ENCODE measurements at regions of chr6 and their contacts with region 1.

Region 1: GRCh38 chr6:155782320-155782731 is 326.7 kb upstream of the NOX3 start:
- DNase-seq: peak; percentile 75
- H3K4me3 Mint-ChIP-seq: peak overlapping the region; percentile 37
- H3K27ac Mint-ChIP-seq: peak overlapping the region; percentile 94
- H3K4me1 Mint-ChIP-seq: peaks cover 21% of the 10 kb centered on the region
- H3K27me3 Mint-ChIP-seq: no peaks in the 10 kb centered on the region
- CTCF ChIP-seq: no peak

Region 2: DNA sequence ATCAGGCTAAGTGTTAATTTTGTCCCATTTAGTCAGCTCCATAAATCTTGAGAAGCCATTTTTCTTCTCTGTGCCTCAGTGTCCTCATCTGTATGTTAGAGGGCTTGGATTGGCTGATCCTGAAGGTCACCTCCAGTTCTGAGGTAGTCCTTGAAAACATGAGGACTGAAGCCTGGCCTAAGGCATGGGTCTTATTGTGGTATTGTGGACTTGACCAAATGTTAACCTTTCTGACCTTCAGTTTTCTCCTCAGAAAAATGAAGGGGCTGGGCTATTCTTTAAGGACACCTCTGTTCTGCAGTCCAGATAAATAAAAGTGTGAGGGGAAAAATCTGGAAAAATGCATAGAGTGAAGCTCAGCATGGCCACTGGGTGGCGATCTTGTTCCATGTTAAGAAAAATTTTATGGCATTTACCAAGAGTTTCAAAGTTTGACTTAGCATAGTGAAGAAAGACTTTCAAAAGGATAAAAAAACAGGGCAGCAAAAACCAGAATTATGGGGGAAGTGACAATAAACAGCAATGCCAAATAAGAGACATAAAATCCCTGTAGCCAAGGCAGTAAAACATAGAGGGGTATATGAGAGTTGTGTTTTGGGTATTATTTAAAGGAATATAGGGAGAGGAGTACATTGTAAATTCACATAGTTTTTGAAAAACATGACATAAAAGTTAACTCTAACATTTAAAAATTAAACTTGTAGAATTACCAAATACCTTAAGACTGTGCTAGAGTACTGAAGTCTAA is 454.8 kb before region 1 on chr6:
- CTCF ChIA-PET with region 1: no interaction called
- intact Hi-C with region 1: loop called (anchors 5 kb)
- DNase-seq: peak; percentile 67
- H3K4me3 Mint-ChIP-seq: peak overlapping the region; percentile 55
- H3K27ac Mint-ChIP-seq: peak overlapping the region; percentile 96
- H3K4me1 Mint-ChIP-seq: peaks cover 42% of the 10 kb centered on the region
- H3K27me3 Mint-ChIP-seq: no peaks in the 10 kb centered on the region
- CTCF ChIP-seq: peak; percentile 52

Region 3: GRCh38 chr6:155530219-155530834 is 252.0 kb before region 1 on chr6:
- CTCF ChIA-PET with region 1: no interaction called
- intact Hi-C with region 1: loop called (anchors 2 kb)
- DNase-seq: peak; percentile 12
- H3K4me3 Mint-ChIP-seq: no peak overlapping the region
- H3K27ac Mint-ChIP-seq: no peak overlapping the region
- H3K4me1 Mint-ChIP-seq: peaks cover 8% of the 10 kb centered on the region
- H3K27me3 Mint-ChIP-seq: no peaks in the 10 kb centered on the region
- CTCF ChIP-seq: peak; percentile 41

Region 4: DNA sequence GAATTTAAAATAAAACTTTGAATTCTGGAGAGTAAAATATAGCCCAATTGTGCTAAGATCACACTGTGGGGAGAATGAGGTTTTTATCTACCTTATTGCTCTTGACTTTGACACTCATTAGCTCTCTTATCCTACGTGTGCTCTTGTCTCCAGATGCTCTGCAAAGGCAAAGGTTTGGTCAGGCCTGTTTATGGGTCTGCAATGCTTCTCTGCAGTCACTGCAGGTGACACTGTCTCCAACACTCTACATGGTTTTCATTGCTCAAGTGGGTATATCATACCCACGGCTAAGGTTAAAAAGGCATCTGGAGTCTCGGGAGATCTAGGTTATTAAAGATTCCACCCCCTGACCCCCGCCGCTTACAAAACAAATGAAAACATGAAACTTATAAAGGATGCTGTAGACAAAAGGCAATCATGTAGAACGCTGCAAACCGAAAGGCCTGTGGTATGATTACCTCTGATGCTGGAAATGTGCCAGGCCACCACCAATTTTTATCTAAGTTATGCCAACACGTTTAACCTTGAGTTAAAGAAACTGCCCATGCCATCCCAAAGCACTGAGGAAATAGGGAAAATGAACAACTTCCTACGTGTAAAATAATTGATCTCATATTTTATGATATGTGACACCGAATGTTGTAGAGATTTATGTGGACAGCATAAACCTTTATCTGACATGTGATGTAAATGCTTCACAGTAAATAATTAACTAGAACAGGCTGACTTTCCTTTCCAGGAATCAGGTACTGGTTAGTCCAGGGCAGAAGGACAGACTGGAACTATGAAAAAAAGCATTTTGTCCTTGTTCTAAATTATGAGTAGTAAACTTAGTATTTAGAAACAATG is 88.5 kb before region 1 on chr6:
- CTCF ChIA-PET with region 1: interaction called, 5 read pairs
- intact Hi-C with region 1: loop called (anchors 5 kb)
- DNase-seq: peak; percentile 52
- H3K4me3 Mint-ChIP-seq: no peak overlapping the region
- H3K27ac Mint-ChIP-seq: peak overlapping the region; percentile 44
- H3K4me1 Mint-ChIP-seq: peaks cover 8% of the 10 kb centered on the region
- H3K27me3 Mint-ChIP-seq: no peaks in the 10 kb centered on the region
- CTCF ChIP-seq: no peak

Region 5: GRCh38 chr6:155882527-155883333 is 100.4 kb after region 1 on chr6:
- CTCF ChIA-PET with region 1: no interaction called
- intact Hi-C with region 1: loop called (anchors 5 kb)
- DNase-seq: peak; percentile 8
- H3K4me3 Mint-ChIP-seq: peak overlapping the region; percentile 16
- H3K27ac Mint-ChIP-seq: peak overlapping the region; percentile 78
- H3K4me1 Mint-ChIP-seq: peaks cover 37% of the 10 kb centered on the region
- H3K27me3 Mint-ChIP-seq: no peaks in the 10 kb centered on the region
- CTCF ChIP-seq: no peak

Region 6: DNA sequence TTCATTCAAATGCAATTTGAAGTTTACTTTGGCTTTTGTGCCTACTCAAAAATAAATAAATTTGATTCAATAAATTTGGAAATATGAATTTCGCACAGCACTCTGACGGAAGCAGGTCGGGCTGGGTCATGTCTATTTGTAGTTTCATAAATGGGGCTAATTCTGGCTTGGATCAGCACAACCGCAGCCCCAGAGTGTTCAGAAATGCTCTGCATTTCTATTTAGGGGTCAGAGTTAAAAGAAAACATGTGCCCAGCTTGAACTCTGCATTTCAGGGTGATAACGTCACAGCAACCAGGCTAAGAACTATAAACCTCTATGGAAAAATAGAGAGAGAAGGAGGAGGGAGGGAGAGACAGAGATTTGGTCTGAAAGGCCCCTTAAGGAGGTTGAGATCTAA is 154.2 kb after region 1 on chr6:
- CTCF ChIA-PET with region 1: no interaction called
- intact Hi-C with region 1: loop called (anchors 5 kb)
- DNase-seq: no peak
- H3K4me3 Mint-ChIP-seq: no peak overlapping the region
- H3K27ac Mint-ChIP-seq: no peak overlapping the region
- H3K4me1 Mint-ChIP-seq: no peaks in the 10 kb centered on the region
- H3K27me3 Mint-ChIP-seq: no peaks in the 10 kb centered on the region
- CTCF ChIP-seq: no peak

Region 7: DNA sequence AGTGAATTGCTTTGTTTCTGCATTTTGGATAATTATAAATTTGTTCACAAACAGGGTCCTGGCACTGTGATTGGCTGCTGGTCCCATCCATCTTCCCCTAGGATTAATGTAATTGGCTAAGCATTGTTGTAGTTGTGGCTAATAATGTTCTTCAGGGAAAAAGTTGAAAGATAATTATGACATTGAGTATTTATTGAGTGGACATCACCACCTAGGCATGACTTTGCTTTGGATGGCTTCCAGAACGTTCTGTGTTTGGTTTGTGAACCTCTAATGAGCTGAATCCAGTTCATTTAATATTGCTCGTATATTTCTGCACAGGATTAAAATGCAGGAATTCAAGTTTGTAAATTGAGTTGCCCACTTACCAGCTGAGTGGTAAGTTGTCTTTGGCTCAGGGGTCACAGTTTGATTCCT is 1049.9 kb after region 1 on chr6:
- CTCF ChIA-PET with region 1: no interaction called
- intact Hi-C with region 1: no loop called
- DNase-seq: no peak
- H3K4me3 Mint-ChIP-seq: no peak overlapping the region
- H3K27ac Mint-ChIP-seq: no peak overlapping the region
- H3K4me1 Mint-ChIP-seq: peaks cover 12% of the 10 kb centered on the region
- H3K27me3 Mint-ChIP-seq: no peaks in the 10 kb centered on the region
- CTCF ChIP-seq: no peak

Measured in Calu3 (cell line).